A673 (cell line): ENCODE measurements at regions of chr16 and their contacts with region 1.

Region 1: GRCh38 chr16:22206013-22206841 is at the start of gene EEF2K:
- DNase-seq: peak; percentile 91
- H3K4me3 ChIP-seq: peak within 1 kb of the TSS; percentile 99
- H3K27ac ChIP-seq: peak within 1 kb of the TSS; percentile 72
- H3K4me1 ChIP-seq: no peaks in the 10 kb centered on the region
- H3K27me3 ChIP-seq: no peaks in the 10 kb centered on the region
- CTCF ChIP-seq: peak; percentile 63
- total RNA-seq, gene EEF2K: 14.3 and 18.4 TPM in 2 replicates

Region 2: GRCh38 chr16:20976576-20976975 is 1229.7 kb before region 1 on chr16:
- CTCF ChIA-PET with region 1: no interaction called
- POLR2A ChIA-PET with region 1: no interaction called
- intact Hi-C with region 1: no loop called
- DNase-seq: no peak
- H3K4me3 ChIP-seq: no peak overlapping the region
- H3K27ac ChIP-seq: no peak overlapping the region
- H3K4me1 ChIP-seq: no peaks in the 10 kb centered on the region
- H3K27me3 ChIP-seq: no peaks in the 10 kb centered on the region
- CTCF ChIP-seq: no peak

Region 3: DNA sequence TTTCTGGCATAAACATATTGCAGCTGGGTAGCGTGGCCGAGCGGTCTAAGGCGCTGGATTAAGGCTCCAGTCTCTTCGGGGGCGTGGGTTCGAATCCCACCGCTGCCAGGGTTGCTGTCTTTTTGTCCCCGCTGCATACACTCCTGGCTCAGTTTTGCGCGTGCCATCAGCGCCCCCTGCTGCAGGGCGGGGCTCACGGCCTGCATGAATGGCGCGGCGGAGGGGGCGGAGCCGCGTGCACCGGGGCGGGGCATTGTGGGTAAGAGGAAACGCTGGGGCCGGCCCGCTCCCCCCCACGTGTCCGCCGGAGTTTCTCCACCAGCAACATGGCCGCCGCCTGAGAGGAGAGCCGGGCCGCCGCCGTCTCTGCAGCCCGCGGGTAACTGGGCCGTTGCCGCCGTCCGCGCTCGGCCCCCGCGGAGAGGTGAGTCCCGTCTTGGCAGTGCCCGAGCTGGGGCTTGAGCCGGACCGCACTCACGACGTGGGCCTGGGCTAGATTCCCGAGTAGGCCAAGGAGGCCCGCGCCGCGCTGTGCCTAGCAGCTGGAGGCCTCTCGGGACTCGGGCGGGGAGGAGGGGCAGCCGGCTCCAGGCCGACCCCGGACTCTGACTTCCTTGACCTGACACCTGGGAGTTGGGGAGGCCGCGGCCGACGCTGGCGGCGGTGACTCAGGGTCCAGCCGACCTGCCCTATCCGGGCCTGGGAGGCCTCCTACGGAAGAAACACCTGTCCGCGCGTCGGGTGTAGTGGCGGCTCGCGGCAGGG is 91.1 kb after region 1 on chr16 and contains the start of gene POLR3E:
- CTCF ChIA-PET with region 1: interaction called, 10 read pairs
- POLR2A ChIA-PET with region 1: no interaction called
- intact Hi-C with region 1: no loop called
- DNase-seq: peak; percentile 99
- H3K4me3 ChIP-seq: peak within 1 kb of the TSS; percentile 88
- H3K27ac ChIP-seq: peak within 1 kb of the TSS; percentile 96
- H3K4me1 ChIP-seq: no peaks in the 10 kb centered on the region
- H3K27me3 ChIP-seq: no peaks in the 10 kb centered on the region
- CTCF ChIP-seq: peak; percentile 95
- total RNA-seq, gene POLR3E: 69.8 and 80.6 TPM in 2 replicates